ENCODE measurements at regions of chr11 and their contacts with region 1.

Region 1: DNA sequence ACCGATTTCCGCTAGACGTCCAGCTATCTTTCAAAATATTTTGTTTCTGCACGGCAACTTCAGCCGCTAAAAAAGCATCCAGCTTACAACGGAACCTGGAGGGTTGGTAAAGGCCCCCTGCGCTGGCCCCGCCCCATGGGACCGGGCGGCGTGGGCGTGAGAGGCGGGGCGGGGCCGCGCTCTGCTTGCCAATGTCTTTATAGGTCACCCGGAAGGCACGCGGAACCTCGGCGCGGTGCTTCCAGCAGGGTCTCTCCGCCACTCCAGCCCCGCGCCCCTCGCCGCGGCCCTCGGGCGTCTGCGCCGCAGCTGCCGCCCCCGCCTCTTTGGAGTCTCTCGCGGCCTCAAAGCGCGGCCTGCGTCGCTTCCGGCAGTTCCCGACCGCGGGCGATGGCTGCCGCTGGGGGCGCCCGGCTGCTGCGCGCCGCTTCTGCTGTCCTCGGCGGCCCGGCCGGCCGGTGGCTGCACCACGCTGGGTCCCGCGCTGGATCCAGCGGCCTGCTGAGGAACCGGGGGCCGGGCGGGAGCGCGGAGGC is at the start of gene FDX1:
- DNase-seq: peak; percentile 77 to 82
- ATAC-seq: peak; percentile 91 to 97 (median 93)
- H3K4me3 ChIP-seq: peak within 1 kb of the TSS; percentile 55 to 94 (median 88)
- H3K27ac ChIP-seq: peak within 1 kb of the TSS; percentile 84 to 96 (median 94)
- H3K4me1 ChIP-seq: peaks cover 0 to 44% (median 36%) of the 10 kb centered on the region in 9 donors
- H3K27me3 ChIP-seq: no peaks in the 10 kb centered on the region
- CTCF ChIP-seq: peak; percentile 43 to 90 (median 79)
- total RNA-seq, gene FDX1: 18.4 to 30.3 (median 22.0) TPM

Region 2: GRCh38 chr11:109946322-109946846 is 483.4 kb before region 1 on chr11:
- intact Hi-C with region 1: loop called in 3 of 10 experiments (anchors 10 kb)
- DNase-seq: peak; percentile 74 to 88
- ATAC-seq: peak; percentile 90 to 100 (median 98)
- H3K4me3 ChIP-seq: peak overlapping the region in 8 of 10 donors; percentile 11 to 42 (median 35)
- H3K27ac ChIP-seq: peak overlapping the region in 9 of 10 donors; percentile 34 to 77 (median 52)
- H3K4me1 ChIP-seq: peaks cover 0 to 9% (median 4%) of the 10 kb centered on the region in 9 donors
- H3K27me3 ChIP-seq: no peaks in the 10 kb centered on the region
- CTCF ChIP-seq: peak; percentile 75 to 95 (median 92)

Region 3: DNA sequence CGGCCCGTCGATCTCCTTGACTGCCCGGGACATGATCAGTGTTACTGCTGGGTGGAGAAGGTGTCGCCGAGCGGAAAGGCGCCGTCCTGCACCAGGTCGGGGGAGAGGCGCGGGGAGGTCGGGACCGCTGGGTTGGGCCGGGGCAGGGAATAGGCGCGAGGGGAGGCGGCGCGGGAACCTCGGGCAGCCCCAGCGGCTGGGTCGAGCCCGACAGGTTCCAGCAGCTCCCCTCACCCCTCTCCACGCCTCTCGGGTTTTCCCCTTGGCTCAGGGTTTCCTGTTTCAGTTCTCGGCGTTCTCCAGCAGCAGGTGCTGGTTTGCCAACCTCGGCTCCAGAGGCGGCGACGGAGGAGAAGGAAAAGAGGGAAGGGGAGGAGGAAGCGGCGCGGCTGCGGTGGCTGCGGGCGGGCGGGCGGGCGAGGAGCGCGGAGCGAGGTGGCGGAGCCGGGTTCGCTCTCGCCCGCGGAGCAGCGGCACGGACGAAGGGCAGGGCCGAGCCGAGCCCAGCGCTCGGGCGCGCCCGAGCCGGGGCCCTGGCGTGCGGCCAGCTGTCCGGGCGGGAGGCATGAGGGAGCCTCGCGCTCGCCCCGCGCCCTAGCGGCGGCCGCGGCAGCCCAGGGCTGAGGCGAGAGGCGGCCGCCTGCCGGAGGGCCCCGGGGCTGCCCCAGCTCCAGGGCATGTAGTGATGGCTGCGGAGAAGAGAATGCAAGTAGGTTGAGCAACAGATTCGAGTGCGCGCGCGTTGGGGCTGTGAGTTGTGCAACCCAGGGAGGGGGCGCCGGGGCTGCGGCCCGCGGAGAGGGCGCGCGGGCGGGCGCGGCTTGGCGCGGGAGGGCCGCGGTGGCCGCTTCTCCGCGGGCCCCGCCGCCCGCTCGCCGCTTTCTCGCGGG is 337.0 kb before region 1 on chr11 and contains the start of gene ZC3H12C:
- intact Hi-C with region 1: loop called in 1 of 10 experiments (anchors 10 kb)
- DNase-seq: peak; percentile 85 to 87
- ATAC-seq: peak; percentile 78 to 91 (median 86)
- H3K4me3 ChIP-seq: peak within 1 kb of the TSS; percentile 69 to 86 (median 79)
- H3K27ac ChIP-seq: peak within 1 kb of the TSS; percentile 91 to 97 (median 95)
- H3K4me1 ChIP-seq: peaks cover 0 to 32% (median 26%) of the 10 kb centered on the region in 9 donors
- H3K27me3 ChIP-seq: peaks cover 0 to 6% (median 0%) of the 10 kb centered on the region in 7 donors
- CTCF ChIP-seq: peak in 7 of 9 donors; percentile 41 to 70 (median 56)
- total RNA-seq, gene ZC3H12C: 15.1 to 22.8 (median 20.9) TPM

Region 4: DNA sequence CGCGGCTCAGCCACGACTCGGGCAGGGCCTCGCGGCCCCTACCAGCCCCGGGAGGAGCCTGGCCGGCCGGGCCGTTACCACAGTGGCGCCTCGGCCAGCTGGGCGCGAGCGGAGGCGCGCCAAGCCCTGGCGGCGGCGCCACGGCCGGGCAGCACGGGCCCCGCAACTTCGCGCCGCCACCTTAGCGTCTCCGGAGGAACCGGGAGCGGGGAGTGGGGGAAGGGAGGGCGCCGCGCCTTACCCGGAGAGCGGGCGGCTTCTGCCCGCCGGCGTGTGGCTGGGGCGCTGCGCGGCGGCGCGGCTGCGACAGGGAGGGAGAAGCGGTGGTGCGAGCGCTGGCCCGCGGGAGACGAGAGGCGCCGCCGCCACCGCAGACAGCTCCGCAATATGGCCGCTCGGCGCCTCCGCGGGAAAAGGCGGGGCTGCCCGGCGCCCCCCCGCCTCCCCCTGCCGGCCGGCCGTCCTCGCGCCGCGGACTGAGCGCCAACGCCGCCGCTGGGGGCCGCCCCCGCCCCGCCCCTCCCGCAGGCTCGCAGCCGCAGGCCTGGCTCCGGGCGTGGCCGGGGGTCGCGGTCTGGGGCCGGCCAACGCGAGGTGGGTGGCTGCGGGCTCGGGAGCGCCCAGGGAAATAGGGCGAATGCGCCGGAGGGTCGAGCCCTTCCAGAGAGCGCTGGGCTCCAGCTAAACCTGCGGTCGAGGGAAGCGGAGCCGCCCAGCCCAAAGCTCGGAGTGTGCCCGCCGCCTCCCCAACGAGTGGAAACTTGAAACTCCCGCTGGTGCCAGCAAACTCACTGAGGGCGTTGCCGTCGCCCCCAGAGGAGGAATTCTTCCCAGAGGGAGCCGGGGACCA is 133.3 kb before region 1 on chr11 and contains the start of gene RDX:
- intact Hi-C with region 1: loop called in 4 of 10 experiments (anchors 5 to 10 kb)
- DNase-seq: peak; percentile 67 to 82
- ATAC-seq: peak; percentile 80 to 94 (median 90)
- H3K4me3 ChIP-seq: peak within 1 kb of the TSS; percentile 57 to 99 (median 86)
- H3K27ac ChIP-seq: peak within 1 kb of the TSS; percentile 89 to 99 (median 98)
- H3K4me1 ChIP-seq: peaks cover 4 to 52% (median 38%) of the 10 kb centered on the region in 9 donors
- H3K27me3 ChIP-seq: no peaks in the 10 kb centered on the region
- CTCF ChIP-seq: peak in 3 of 9 donors; percentile 14 to 37 (median 16)
- total RNA-seq, gene RDX: 105 to 140 (median 127) TPM

Region 5: GRCh38 chr11:110409174-110409573 is 20.6 kb before region 1 on chr11:
- intact Hi-C with region 1: no loop called
- DNase-seq: no peak
- ATAC-seq: no peak
- H3K4me3 ChIP-seq: no peak overlapping the region
- H3K27ac ChIP-seq: no peak overlapping the region
- H3K4me1 ChIP-seq: peaks cover 0 to 4% (median 0%) of the 10 kb centered on the region in 9 donors
- H3K27me3 ChIP-seq: no peaks in the 10 kb centered on the region
- CTCF ChIP-seq: no peak

Region 6: GRCh38 chr11:110522456-110522855 is 92.7 kb after region 1 on chr11:
- intact Hi-C with region 1: no loop called
- DNase-seq: no peak
- ATAC-seq: no peak
- H3K4me3 ChIP-seq: no peak overlapping the region
- H3K27ac ChIP-seq: no peak overlapping the region
- H3K4me1 ChIP-seq: peaks cover 0 to 11% (median 0%) of the 10 kb centered on the region in 9 donors
- H3K27me3 ChIP-seq: peaks cover 0 to 4% (median 0%) of the 10 kb centered on the region in 7 donors
- CTCF ChIP-seq: no peak

Region 7: GRCh38 chr11:111230122-111230465 is 800.3 kb after region 1 on chr11:
- intact Hi-C with region 1: loop called in 1 of 10 experiments (anchors 10 kb)
- DNase-seq: no peak
- ATAC-seq: peak in 7 of 8 donors; percentile 23 to 56 (median 39)
- H3K4me3 ChIP-seq: peak overlapping the region in 7 of 10 donors; percentile 38 to 62 (median 57)
- H3K27ac ChIP-seq: no peak overlapping the region
- H3K4me1 ChIP-seq: peaks cover 0 to 10% (median 3%) of the 10 kb centered on the region in 9 donors
- H3K27me3 ChIP-seq: peaks cover 0 to 8% (median 0%) of the 10 kb centered on the region in 7 donors
- CTCF ChIP-seq: no peak

Measured in heart right ventricle (tissue), 16 donors.